Breast epithelium (tissue), 4 donors: ENCODE measurements at regions of chr9 and their contacts with region 1.

Region 1: GRCh38 chr9:30673132-30673531 is 1711.3 kb upstream of the ACO1 start:
- DNase-seq: no peak
- H3K4me3 ChIP-seq: no peak overlapping the region
- H3K27ac ChIP-seq: no peak overlapping the region
- H3K4me1 ChIP-seq: no peaks in the 10 kb centered on the region
- H3K27me3 ChIP-seq: no peaks in the 10 kb centered on the region
- CTCF ChIP-seq: no peak
- POLR2A ChIP-seq: no peak

Region 2: GRCh38 chr9:29118555-29118954 is 1554.6 kb before region 1 on chr9:
- intact Hi-C with region 1: loop called (anchors 5 kb)
- DNase-seq: no peak
- H3K4me3 ChIP-seq: no peak overlapping the region
- H3K27ac ChIP-seq: no peak overlapping the region
- H3K4me1 ChIP-seq: no peaks in the 10 kb centered on the region
- H3K27me3 ChIP-seq: no peaks in the 10 kb centered on the region
- CTCF ChIP-seq: no peak
- POLR2A ChIP-seq: no peak

Region 3: GRCh38 chr9:30534896-30535295 is 138.2 kb before region 1 on chr9:
- intact Hi-C with region 1: no loop called
- DNase-seq: no peak
- H3K4me3 ChIP-seq: no peak overlapping the region
- H3K27ac ChIP-seq: no peak overlapping the region
- H3K4me1 ChIP-seq: no peaks in the 10 kb centered on the region
- H3K27me3 ChIP-seq: no peaks in the 10 kb centered on the region
- CTCF ChIP-seq: no peak
- POLR2A ChIP-seq: no peak